ENCODE measurements at regions of chr5 and their contacts with region 1.

Region 1: GRCh38 chr5:180784497-180785097 is 18.0 kb downstream of the MGAT1 start:
- DNase-seq: peak; percentile 78
- ATAC-seq: peak; percentile 76
- H3K4me3 Mint-ChIP-seq: no peak overlapping the region
- H3K27ac Mint-ChIP-seq: no peak overlapping the region
- H3K4me1 Mint-ChIP-seq: peaks cover 19% of the 10 kb centered on the region
- H3K27me3 Mint-ChIP-seq: no peaks in the 10 kb centered on the region

Region 2: DNA sequence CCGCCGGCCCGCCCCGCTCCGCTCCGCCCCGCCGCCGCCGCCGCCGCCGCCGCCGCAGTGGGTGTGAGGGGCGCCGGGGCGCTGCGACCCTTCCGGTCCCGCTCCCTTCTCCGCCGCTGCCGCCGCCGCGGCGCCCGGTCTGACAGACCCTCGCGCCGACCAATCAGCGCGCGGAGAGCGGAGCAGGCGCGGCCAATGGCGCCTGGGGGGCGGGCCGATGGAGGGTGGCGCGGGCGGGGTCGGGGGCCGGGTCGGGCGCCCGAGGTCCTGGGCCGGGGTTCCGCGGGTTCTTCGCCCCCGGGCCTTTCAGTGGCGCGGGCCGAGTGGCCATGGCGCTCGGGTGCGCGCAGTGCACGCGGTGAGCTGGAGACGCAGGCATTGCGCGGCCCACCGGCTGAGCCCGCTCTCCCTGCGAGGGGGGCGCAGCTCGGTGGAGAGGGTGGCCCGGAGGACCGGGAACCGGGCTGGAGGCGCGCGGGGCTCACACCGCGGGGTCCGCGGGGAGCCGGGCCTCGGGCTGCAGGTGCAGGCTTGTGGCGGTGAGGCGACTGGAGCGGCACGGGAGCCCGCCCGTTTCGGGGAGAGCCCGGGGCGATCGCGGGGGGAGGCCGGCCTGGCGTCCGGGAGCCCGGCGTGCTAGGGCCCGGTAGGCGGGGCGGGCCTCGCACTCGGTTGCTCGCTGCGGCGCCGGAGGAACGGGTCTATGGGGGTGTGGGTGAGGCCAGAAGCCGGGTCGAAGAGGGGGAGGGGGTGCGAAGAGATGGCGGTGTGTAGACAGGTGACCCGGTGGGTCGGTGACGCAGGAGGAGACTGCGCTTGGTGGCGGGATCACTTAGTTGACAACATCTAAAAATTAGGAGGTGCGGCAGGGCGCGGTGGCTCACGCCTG is 492.4 kb before region 1 on chr5 and contains the start of gene MAPK9:
- CTCF ChIA-PET with region 1: no interaction called
- POLR2A ChIA-PET with region 1: no interaction called
- DNase-seq: peak; percentile 85
- ATAC-seq: peak; percentile 87
- H3K4me3 Mint-ChIP-seq: peak within 1 kb of the TSS; percentile 90
- H3K27ac Mint-ChIP-seq: peak within 1 kb of the TSS; percentile 98
- H3K4me1 Mint-ChIP-seq: peaks cover 37% of the 10 kb centered on the region
- H3K27me3 Mint-ChIP-seq: no peaks in the 10 kb centered on the region
- total RNA-seq, gene MAPK9: 42.6 to 44.6 TPM

Region 3: GRCh38 chr5:180796964-180797849 is 12.6 kb after region 1 on chr5:
- CTCF ChIA-PET with region 1: interaction called, 10 read pairs
- POLR2A ChIA-PET with region 1: no interaction called
- DNase-seq: no peak
- ATAC-seq: no peak
- H3K4me3 Mint-ChIP-seq: peak overlapping the region; percentile 13
- H3K27ac Mint-ChIP-seq: peak overlapping the region; percentile 62
- H3K4me1 Mint-ChIP-seq: peaks cover 84% of the 10 kb centered on the region
- H3K27me3 Mint-ChIP-seq: no peaks in the 10 kb centered on the region

Region 4: GRCh38 chr5:181069767-181070491 is 285.3 kb after region 1 on chr5:
- CTCF ChIA-PET with region 1: no interaction called
- POLR2A ChIA-PET with region 1: no interaction called
- DNase-seq: no peak
- ATAC-seq: no peak
- H3K4me3 Mint-ChIP-seq: no peak overlapping the region
- H3K27ac Mint-ChIP-seq: no peak overlapping the region
- H3K4me1 Mint-ChIP-seq: no peaks in the 10 kb centered on the region
- H3K27me3 Mint-ChIP-seq: peaks cover 28% of the 10 kb centered on the region